Testis (tissue), 5 donors: ENCODE measurements at regions of chr12 and their contacts with region 1.

Region 1: GRCh38 chr12:94101738-94102660 is 46.4 kb upstream of the PLXNC1 start:
- DNase-seq: peak; percentile 94
- H3K4me3 ChIP-seq: peak overlapping the region; percentile 47 to 55
- H3K27ac ChIP-seq: peak overlapping the region in 1 of 2 donors; percentile 32
- H3K4me1 ChIP-seq: peaks cover 9% of the 10 kb centered on the region
- H3K27me3 ChIP-seq: no peaks in the 10 kb centered on the region
- CTCF ChIP-seq: peak; percentile 65 to 80 (median 69)
- POLR2A ChIP-seq: no peak

Region 2: GRCh38 chr12:93507165-93507564 is 594.8 kb before region 1 on chr12:
- intact Hi-C with region 1: loop called (anchors 5 kb)
- DNase-seq: no peak
- H3K4me3 ChIP-seq: no peak overlapping the region
- H3K27ac ChIP-seq: no peak overlapping the region
- H3K4me1 ChIP-seq: no peaks in the 10 kb centered on the region
- H3K27me3 ChIP-seq: no peaks in the 10 kb centered on the region
- CTCF ChIP-seq: no peak
- POLR2A ChIP-seq: no peak

Region 3: GRCh38 chr12:94318181-94318580 is 216.2 kb after region 1 on chr12:
- intact Hi-C with region 1: no loop called
- DNase-seq: no peak
- H3K4me3 ChIP-seq: no peak overlapping the region
- H3K27ac ChIP-seq: no peak overlapping the region
- H3K4me1 ChIP-seq: no peaks in the 10 kb centered on the region
- H3K27me3 ChIP-seq: no peaks in the 10 kb centered on the region
- CTCF ChIP-seq: no peak
- POLR2A ChIP-seq: no peak